ENCODE measurements at regions of chr20 and their contacts with region 1.

Region 1: GRCh38 chr20:41411391-41411847 is 44.8 kb upstream of the EMILIN3 start:
- DNase-seq: no peak
- ATAC-seq: no peak
- H3K4me3 ChIP-seq: no peak overlapping the region
- H3K27ac ChIP-seq: no peak overlapping the region
- H3K4me1 ChIP-seq: no peaks in the 10 kb centered on the region
- H3K27me3 ChIP-seq: no peaks in the 10 kb centered on the region
- CTCF ChIP-seq: peak; percentile 21 to 57 (median 30); a peak in 4 of 6 replicates
- POLR2A ChIP-seq: no peak
- RAD21 ChIP-seq: peak; percentile 38; the same call in 1 of the 2 replicates

Region 2: DNA sequence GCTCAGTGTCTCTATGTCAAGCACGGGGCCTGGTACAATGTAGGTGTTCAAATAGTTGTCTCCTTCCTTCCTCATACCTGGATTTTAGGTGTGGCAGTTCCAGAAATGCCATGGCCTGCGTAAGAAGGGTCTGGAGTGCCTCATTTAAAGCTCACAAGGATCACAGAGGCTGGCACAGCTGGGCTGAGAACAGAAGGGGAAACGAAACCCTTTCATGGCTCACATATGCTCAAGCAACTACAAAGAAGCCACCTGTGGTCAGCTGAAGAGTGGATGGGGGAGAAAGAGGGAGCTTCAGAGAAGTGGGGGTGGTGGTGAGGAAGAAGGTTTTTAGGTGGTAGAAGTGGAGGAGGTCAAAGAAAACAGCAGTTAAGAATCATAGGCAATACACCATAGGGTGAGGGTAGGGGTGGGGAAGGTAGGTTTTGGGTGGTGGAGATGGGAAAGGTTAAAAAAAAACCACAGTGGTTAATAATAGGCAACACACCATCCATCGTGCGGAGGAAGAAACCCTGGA is 399.8 kb before region 1 on chr20:
- CTCF ChIA-PET with region 1: no interaction called
- POLR2A ChIA-PET with region 1: no interaction called
- RAD21 ChIA-PET with region 1: no interaction called
- intact Hi-C with region 1: no loop called
- DNase-seq: no peak
- ATAC-seq: no peak
- H3K4me3 ChIP-seq: no peak overlapping the region
- H3K27ac ChIP-seq: no peak overlapping the region
- H3K4me1 ChIP-seq: peaks cover 49 to 80% of the 10 kb centered on the region in 2 experiments
- H3K27me3 ChIP-seq: no peaks in the 10 kb centered on the region
- CTCF ChIP-seq: no peak
- POLR2A ChIP-seq: no peak
- RAD21 ChIP-seq: no peak

Region 3: DNA sequence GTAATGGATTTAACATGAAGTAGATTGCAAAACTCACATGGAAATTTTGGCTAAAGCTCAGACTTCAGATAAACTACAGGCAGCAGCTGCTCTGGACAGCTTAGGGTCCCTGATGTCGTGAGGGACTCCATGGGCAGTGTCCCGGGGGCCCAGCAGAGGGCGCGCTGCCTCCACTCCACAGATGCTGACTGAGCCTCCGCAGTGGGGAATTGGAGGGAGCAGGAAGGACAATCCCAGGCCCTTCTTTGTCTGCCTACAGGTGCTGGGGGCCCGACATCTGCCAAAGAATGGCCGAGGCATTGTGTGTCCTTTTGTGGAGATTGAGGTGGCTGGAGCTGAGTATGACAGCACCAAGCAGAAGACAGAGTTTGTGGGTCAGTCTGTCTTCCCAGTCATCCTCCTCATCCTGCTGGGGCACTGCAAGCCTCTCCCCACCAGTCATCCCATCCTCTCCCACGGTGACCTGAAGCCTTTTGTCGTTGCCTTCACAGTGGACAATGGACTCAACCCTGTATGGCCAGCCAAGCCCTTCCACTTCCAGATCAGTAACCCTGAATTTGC is 238.2 kb before region 1 on chr20:
- CTCF ChIA-PET with region 1: no interaction called
- POLR2A ChIA-PET with region 1: no interaction called
- RAD21 ChIA-PET with region 1: no interaction called
- intact Hi-C with region 1: loop called (anchors 5 kb)
- DNase-seq: peak; percentile 18
- ATAC-seq: peak; percentile 94
- H3K4me3 ChIP-seq: no peak overlapping the region
- H3K27ac ChIP-seq: no peak overlapping the region
- H3K4me1 ChIP-seq: peaks cover 3 to 15% of the 10 kb centered on the region in 2 experiments; a peak in 3 of 4 replicates
- H3K27me3 ChIP-seq: no peaks in the 10 kb centered on the region
- CTCF ChIP-seq: peak; percentile 83 to 98 (median 96)
- POLR2A ChIP-seq: no peak
- RAD21 ChIP-seq: peak; percentile 93